Naive thymus-derived CD4-positive, alpha-beta T cell (primary cell): ENCODE measurements at regions of chr6 and their contacts with region 1.

Region 1: GRCh38 chr6:57021086-57021720 is 25.3 kb upstream of the KIAA1586 start:
- DNase-seq: peak in 5 of 9 donors; percentile 7 to 35 (median 15)
- ATAC-seq: peak; percentile 76
- H3K4me3 ChIP-seq: no peak overlapping the region
- H3K4me3 Mint-ChIP-seq: no peak overlapping the region
- H3K27ac ChIP-seq: no peak overlapping the region
- H3K27ac Mint-ChIP-seq: no peak overlapping the region
- H3K4me1 ChIP-seq: no peaks in the 10 kb centered on the region
- H3K4me1 Mint-ChIP-seq: no peaks in the 10 kb centered on the region
- H3K27me3 ChIP-seq: no peaks in the 10 kb centered on the region
- H3K27me3 Mint-ChIP-seq: peaks cover 4 to 30% (median 11%) of the 10 kb centered on the region in 5 donors

Region 2: DNA sequence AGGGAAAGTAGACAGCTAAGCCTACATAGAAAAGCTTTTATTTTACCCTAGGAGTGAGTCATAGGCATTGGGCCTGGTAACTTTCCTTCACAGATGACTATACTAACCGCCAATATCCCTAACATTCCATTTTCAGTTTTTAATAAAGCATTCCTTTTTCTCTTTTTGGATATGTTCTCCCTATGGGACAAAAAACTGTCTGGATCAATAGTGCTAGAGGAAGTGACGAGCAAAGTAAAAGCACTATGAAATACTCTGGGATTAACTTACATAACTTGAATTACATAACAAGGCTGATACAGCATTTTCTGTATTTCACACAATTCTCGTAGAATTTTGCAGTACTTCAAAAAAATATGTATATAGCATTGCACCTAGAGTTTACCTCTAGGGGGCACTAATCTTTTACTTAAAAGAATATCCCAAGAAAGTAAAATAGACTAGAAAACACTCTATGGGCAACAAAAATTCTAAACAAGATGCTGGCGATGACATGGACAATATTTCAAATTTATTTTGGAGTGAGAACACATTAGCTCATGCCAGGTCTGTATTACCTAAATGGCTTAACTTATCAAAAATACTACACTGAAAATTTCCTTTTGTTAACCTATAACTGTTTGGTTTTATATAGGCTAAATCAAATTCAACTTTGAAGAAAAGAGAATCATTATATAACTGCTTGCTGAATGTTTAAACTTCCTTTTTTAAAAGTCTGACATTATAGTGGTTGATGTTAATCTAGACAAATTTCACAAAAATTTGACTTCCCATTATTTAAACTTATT is 312.2 kb before region 1 on chr6:
- CTCF ChIA-PET with region 1: interaction called, 3 read pairs
- POLR2A ChIA-PET with region 1: no interaction called
- intact Hi-C with region 1: loop called (anchors 1 kb)
- DNase-seq: peak in 3 of 9 donors; percentile 5 to 30 (median 10)
- ATAC-seq: peak; percentile 36
- H3K4me3 ChIP-seq: no peak overlapping the region
- H3K4me3 Mint-ChIP-seq: no peak overlapping the region
- H3K27ac ChIP-seq: no peak overlapping the region
- H3K27ac Mint-ChIP-seq: no peak overlapping the region
- H3K4me1 ChIP-seq: no peaks in the 10 kb centered on the region
- H3K4me1 Mint-ChIP-seq: no peaks in the 10 kb centered on the region
- H3K27me3 ChIP-seq: no peaks in the 10 kb centered on the region
- H3K27me3 Mint-ChIP-seq: peaks cover 0 to 6% (median 4%) of the 10 kb centered on the region in 5 donors